ENCODE measurements at regions of chrX and their contacts with region 1.

Region 1: GRCh38 chrX:154748712-154749343 is 2.0 kb downstream of the GAB3 start:
- DNase-seq: no peak
- H3K4me3 ChIP-seq: no peak overlapping the region
- CTCF ChIP-seq: peak; percentile 36

Region 2: DNA sequence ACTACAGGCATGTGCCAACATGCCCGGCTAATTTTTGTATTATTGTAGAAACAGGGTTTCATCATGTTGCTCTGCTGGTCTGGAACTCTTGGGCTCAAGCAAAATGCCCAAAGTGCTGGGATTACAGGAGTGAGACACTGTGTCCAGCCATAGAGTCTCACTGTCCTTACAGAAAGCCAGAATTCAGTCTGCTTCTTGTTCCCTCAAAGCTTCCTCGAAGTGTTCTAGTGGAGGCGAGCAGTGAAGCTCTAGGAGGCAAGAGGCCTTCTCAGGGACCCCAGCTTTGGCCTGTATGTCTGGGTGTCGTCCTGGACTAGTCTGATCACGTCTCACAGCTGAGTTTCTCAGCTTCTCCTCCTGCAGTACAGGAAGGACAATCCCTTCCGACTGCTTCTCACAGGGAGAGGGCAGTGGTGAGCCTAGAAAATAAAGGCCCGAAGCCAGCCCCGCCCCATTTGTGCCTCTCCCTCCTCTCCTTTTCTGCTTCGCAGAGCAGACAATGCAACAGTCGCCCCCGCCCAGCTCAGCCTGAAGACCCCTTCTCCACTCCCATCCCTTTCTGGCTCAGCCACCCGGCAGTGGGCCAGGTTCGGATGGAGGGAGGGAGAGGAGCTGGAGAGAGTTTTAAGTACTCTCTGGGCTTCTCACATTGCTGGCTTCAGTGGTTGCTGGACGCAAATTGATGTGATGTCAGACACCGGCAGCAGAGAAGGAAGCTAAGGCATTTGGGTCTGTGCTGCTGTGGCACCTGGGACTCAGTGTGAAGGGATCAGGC is 221.7 kb before region 1 on chrX:
- CTCF ChIA-PET with region 1: no interaction called
- POLR2A ChIA-PET with region 1: no interaction called
- DNase-seq: no peak
- H3K4me3 ChIP-seq: peak overlapping the region; percentile 33
- CTCF ChIP-seq: peak; percentile 60

Region 3: GRCh38 chrX:154717824-154718223 is 31.0 kb before region 1 on chrX:
- CTCF ChIA-PET with region 1: interaction called, 28 read pairs
- POLR2A ChIA-PET with region 1: no interaction called
- DNase-seq: no peak
- H3K4me3 ChIP-seq: no peak overlapping the region
- CTCF ChIP-seq: peak; percentile 6

Region 4: GRCh38 chrX:154738011-154738738 is 10.7 kb before region 1 on chrX:
- CTCF ChIA-PET with region 1: interaction called, 52 read pairs
- POLR2A ChIA-PET with region 1: no interaction called
- DNase-seq: no peak
- H3K4me3 ChIP-seq: no peak overlapping the region
- CTCF ChIP-seq: no peak

Region 5: DNA sequence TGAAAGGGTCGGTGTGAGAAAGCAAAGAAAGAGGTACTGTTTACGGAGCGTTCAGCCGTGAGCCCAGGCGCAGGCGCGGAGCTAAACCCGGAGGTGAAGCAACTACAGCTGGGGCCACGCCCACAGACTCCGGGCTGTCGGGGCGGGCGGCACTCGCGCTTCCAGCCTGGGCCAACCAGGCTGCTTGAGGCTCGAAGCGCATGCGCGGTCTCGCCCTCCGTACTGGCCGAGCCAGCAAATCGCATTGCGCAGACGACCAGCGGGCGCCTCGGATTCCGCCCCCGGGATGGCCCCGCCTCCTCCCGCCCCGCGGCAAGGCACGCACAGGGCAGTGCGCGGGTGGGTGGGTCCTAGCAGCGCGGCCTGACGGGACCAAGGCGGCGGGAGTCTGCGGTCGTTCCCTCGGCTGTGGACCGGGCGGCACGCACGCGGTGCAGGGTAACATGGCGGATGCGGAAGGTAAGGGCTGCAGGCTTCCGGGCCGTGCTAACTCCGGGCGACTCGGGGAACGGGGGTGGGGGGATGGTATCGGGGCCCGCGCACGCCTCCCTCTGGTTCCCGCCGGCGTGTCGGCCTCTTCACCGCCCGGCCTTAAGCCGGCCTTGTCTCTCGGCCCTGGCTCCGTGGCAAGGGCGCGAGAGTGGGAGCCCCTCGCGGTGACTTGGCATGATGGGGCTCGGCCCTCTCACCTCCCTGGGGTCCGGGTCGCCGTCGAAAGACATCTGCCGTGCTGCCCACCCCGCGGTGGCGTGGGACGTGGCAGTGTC is 13.9 kb after region 1 on chrX and contains the start of gene DKC1:
- CTCF ChIA-PET with region 1: interaction called, 15 read pairs
- POLR2A ChIA-PET with region 1: no interaction called
- DNase-seq: no peak
- H3K4me3 ChIP-seq: peak within 1 kb of the TSS; percentile 70
- CTCF ChIP-seq: peak; percentile 21

Region 6: GRCh38 chrX:154840856-154841255 is 92.0 kb after region 1 on chrX:
- CTCF ChIA-PET with region 1: interaction called, 37 read pairs
- POLR2A ChIA-PET with region 1: no interaction called
- DNase-seq: peak; percentile 37
- H3K4me3 ChIP-seq: no peak overlapping the region
- CTCF ChIP-seq: peak; percentile 32